Endothelial cell of umbilical vein (primary cell): ENCODE measurements at regions of chr11 and their contacts with region 1.

Region 1: GRCh38 chr11:113532697-113533424 is 57.7 kb upstream of the DRD2 start:
- DNase-seq: peak; percentile 64
- H3K4me3 ChIP-seq: no peak overlapping the region
- H3K27ac ChIP-seq: no peak overlapping the region
- H3K4me1 ChIP-seq: no peaks in the 10 kb centered on the region
- H3K27me3 ChIP-seq: no peaks in the 10 kb centered on the region
- CTCF ChIP-seq: peak; percentile 75 to 86
- POLR2A ChIP-seq: no peak

Region 2: GRCh38 chr11:113373306-113373705 is 159.6 kb before region 1 on chr11:
- CTCF ChIA-PET with region 1: interaction called, 3 read pairs
- POLR2A ChIA-PET with region 1: no interaction called
- dilution Hi-C with region 1: no loop called
- intact Hi-C with region 1: loop called (anchors 5 kb)
- DNase-seq: no peak
- H3K4me3 ChIP-seq: no peak overlapping the region
- H3K27ac ChIP-seq: no peak overlapping the region
- H3K4me1 ChIP-seq: no peaks in the 10 kb centered on the region
- H3K27me3 ChIP-seq: peaks cover 0 to 3% of the 10 kb centered on the region in 2 experiments
- CTCF ChIP-seq: no peak
- POLR2A ChIP-seq: no peak

Region 3: GRCh38 chr11:113577356-113578032 is 44.6 kb after region 1 on chr11:
- CTCF ChIA-PET with region 1: no interaction called
- POLR2A ChIA-PET with region 1: no interaction called
- dilution Hi-C with region 1: no loop called
- intact Hi-C with region 1: no loop called
- DNase-seq: no peak
- H3K4me3 ChIP-seq: no peak overlapping the region
- H3K27ac ChIP-seq: no peak overlapping the region
- H3K4me1 ChIP-seq: no peaks in the 10 kb centered on the region
- H3K27me3 ChIP-seq: no peaks in the 10 kb centered on the region
- CTCF ChIP-seq: no peak
- POLR2A ChIP-seq: no peak

Region 4: DNA sequence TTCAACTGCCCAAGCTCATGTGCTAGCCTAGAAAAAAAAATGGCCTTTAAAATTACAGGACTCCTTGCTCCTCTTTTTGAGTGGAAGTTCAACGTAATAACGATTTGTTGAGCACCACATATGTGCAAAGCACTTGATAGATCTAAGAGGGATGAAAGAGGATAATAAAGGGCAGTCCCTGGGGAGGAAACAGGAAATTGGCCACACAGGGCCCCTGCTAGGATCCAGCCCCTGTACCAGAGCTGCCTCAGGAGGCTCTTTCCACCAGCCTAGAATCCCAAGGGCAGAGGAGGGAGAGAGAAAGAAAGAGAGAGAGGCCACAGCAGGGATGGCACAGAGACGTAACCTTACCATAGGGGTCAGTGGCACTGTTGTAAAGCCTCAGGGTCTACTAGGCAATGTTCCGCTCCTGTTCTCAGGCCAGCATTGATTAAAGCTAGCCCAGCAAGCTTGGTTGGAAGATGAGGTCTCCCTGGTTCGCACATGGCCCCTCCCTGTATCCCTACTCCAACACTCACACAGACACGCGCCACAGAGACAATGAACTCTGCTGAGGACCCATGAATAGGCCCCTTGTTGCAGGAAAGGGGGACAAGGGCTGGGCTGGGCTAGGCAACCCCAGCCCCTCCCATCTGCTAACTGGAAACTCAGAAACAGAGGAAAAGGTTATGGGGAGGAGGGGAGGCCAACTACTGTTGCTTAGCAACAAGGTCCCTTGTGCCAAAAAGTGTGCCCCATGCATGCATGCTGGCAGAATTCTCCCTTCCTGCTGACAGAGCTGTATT is 173.2 kb after region 1 on chr11 and contains the start of gene TMPRSS5:
- CTCF ChIA-PET with region 1: no interaction called
- POLR2A ChIA-PET with region 1: no interaction called
- dilution Hi-C with region 1: no loop called
- intact Hi-C with region 1: no loop called
- DNase-seq: no peak
- H3K4me3 ChIP-seq: no peak within 1 kb of the TSS
- H3K27ac ChIP-seq: no peak within 1 kb of the TSS
- H3K4me1 ChIP-seq: no peaks in the 10 kb centered on the region
- H3K27me3 ChIP-seq: no peaks in the 10 kb centered on the region
- CTCF ChIP-seq: no peak
- POLR2A ChIP-seq: no peak
- total RNA-seq, gene TMPRSS5: 0.58 and 0.64 TPM in 2 replicates